Naive thymus-derived CD8-positive, alpha-beta T cell (primary cell): ENCODE measurements at regions of chr14 and their contacts with region 1.

Region 1: DNA sequence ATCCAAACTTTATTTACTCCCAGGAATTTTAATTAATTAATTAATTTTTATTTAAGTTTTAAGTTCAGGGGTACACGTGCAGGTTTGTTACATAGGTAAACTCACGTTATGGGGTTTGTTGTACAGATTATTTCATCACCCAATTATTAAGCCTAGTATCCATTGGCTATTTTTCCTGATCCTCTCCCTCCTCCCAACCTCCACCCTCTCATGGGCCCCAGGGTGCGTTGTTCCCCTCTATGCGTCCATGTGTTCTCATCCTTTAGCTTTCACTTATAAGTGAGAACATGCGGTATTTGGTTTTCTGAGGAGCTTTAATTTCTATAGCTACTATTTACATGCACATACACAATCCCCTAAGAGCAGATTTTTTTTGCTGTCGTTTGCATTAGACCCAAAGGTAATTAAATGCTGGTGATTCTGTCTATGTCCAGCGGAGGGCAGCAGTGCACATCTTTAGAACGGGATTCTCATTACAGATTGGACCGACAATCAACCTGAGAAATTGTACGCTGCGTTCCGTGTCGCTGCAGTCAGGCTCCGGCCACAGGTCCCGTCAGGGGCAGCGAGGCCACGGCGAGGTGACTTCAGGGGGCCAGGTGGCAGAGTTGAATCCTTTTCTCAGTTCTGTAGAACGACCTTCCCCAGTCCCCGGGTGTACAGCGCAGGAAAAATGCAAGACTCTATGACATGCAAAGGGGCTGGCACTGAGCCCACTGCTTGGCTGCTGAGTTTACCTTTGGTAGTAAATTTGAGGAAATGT is 11.6 kb downstream of the TMEM30B start:
- DNase-seq: peak; percentile 55 to 86 (median 74)
- ATAC-seq: peak; percentile 93 to 96
- H3K4me3 Mint-ChIP-seq: peak overlapping the region; percentile 64 to 86 (median 76)
- H3K27ac Mint-ChIP-seq: peak overlapping the region in 3 of 10 donors; percentile 30 to 64 (median 55)
- H3K4me1 Mint-ChIP-seq: peaks cover 0 to 5% (median 3%) of the 10 kb centered on the region in 4 donors
- H3K27me3 Mint-ChIP-seq: peaks cover 18 to 51% (median 44%) of the 10 kb centered on the region in 5 donors

Region 2: GRCh38 chr14:61280526-61281185 is 11.2 kb after region 1 on chr14:
- POLR2A ChIA-PET with region 1: interaction called, 10 read pairs
- DNase-seq: peak; percentile 64 to 84 (median 76)
- ATAC-seq: peak; percentile 84 to 85
- H3K4me3 Mint-ChIP-seq: peak overlapping the region; percentile 86 to 97 (median 92)
- H3K27ac Mint-ChIP-seq: peak overlapping the region; percentile 89 to 98 (median 94)
- H3K4me1 Mint-ChIP-seq: peaks cover 11 to 38% (median 30%) of the 10 kb centered on the region in 4 donors
- H3K27me3 Mint-ChIP-seq: peaks cover 0 to 20% (median 0%) of the 10 kb centered on the region in 5 donors